CD4-positive, alpha-beta memory T cell (primary cell): ENCODE measurements at regions of chr12 and their contacts with region 1.

Region 1: DNA sequence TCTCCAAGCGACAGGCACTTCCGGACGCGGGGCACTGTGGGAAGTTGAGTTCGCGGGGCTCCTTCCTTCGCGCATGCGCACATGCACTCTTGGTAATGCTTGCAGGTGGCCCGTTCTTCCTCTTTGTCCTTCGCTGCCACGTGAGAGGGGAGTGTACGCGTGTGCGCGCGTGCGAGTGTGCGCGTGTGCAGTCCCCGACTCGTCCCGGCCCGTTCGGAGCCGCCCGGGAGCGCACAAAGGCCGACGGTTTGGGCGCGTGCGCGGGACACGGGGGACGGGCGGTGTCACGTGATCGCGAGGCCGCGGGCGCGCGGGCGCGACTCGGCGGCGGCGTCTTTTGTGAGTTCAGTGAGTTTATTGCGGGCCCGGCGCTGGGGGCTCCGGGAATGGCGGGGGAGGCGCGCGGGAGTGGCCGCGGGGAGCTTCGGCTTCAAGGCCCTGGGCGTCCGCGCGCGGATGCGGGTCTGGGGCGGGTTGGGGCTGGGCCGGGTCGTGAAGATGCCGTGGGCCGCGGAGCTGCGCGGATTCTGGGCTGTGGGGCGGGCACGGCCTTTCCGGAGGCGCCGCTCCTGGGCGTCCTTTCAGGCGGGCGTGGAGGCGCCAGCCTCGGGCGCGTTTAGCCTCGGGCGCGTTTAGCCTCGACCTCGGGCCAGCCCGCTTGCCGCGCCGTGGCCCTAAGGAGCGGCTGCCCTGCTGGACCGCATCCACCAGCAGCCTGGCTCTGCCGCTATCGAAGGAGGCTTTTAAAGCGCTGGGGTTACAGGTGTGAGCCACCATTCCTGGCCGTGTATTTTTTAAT is at the start of gene ZNF84:
- DNase-seq: peak; percentile 96 to 99 (median 98)
- H3K4me3 ChIP-seq: peak within 1 kb of the TSS in 1 of 2 donors; percentile 54
- H3K4me3 Mint-ChIP-seq: peak within 1 kb of the TSS; percentile 85 to 98 (median 94)
- H3K27ac ChIP-seq: peak within 1 kb of the TSS; percentile 77
- H3K27ac Mint-ChIP-seq: peak within 1 kb of the TSS; percentile 91 to 98 (median 96)
- H3K4me1 ChIP-seq: peaks cover 12% of the 10 kb centered on the region
- H3K4me1 Mint-ChIP-seq: peaks cover 3 to 14% (median 7%) of the 10 kb centered on the region in 4 donors
- H3K27me3 ChIP-seq: no peaks in the 10 kb centered on the region
- H3K27me3 Mint-ChIP-seq: no peaks in the 10 kb centered on the region
- total RNA-seq, gene ZNF84: 42.0 to 46.2 TPM

Region 2: DNA sequence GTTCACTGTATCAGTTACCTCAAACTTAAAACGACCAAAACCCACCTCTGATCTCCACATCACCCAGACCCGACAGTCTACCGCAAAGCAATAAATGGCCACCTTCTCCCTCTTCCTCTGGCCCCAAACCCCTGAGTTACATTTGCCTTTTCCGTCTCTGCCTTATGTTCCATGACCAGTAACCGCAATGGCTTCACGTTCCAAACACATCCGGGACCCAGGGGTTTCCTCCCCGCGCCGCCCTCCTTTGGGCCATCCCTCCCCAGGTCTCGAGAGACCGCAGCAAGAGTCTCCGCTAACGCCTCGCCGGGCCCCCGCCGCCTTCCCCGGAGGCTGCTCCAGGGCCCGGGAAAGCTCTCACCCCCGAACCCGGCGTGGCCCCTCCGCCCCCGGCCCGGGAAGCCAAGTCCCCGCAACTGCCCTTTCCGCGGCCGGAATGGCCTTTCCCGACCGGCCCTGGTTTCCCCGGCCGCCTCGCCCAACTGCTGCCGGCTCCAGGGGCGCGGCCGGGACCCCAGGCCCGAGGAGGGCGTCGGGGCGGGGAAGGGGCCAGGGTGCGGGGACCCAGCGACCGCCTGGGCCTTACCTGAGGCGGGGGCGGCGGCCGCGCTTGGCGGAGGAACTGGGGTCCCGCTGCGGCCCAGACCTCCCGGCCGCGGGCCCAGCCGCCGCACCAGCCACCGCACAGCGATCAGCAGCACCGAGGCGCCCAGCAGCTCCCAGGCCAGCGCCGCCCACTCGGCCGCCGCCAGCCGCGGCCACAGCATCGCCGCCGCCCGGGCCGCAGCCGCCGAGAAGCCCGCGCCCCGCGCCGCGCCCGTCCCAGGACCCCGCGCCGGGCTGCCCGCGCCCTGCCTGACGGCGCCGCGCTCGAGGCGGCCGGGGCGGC is 276.1 kb before region 1 on chr12 and contains the start of gene ANKLE2:
- CTCF ChIA-PET with region 1: no interaction called
- POLR2A ChIA-PET with region 1: no interaction called
- intact Hi-C with region 1: loop called (anchors 5 kb)
- DNase-seq: peak; percentile 68 to 86 (median 70)
- H3K4me3 ChIP-seq: peak within 1 kb of the TSS; percentile 75 to 81
- H3K4me3 Mint-ChIP-seq: peak within 1 kb of the TSS; percentile 82 to 99 (median 93)
- H3K27ac ChIP-seq: peak within 1 kb of the TSS; percentile 89
- H3K27ac Mint-ChIP-seq: peak within 1 kb of the TSS; percentile 95 to 99 (median 97)
- H3K4me1 ChIP-seq: peaks cover 24% of the 10 kb centered on the region
- H3K4me1 Mint-ChIP-seq: peaks cover 14 to 27% (median 22%) of the 10 kb centered on the region in 4 donors
- H3K27me3 ChIP-seq: no peaks in the 10 kb centered on the region
- H3K27me3 Mint-ChIP-seq: no peaks in the 10 kb centered on the region
- total RNA-seq, gene ANKLE2: 95.6 to 101 TPM

Region 3: DNA sequence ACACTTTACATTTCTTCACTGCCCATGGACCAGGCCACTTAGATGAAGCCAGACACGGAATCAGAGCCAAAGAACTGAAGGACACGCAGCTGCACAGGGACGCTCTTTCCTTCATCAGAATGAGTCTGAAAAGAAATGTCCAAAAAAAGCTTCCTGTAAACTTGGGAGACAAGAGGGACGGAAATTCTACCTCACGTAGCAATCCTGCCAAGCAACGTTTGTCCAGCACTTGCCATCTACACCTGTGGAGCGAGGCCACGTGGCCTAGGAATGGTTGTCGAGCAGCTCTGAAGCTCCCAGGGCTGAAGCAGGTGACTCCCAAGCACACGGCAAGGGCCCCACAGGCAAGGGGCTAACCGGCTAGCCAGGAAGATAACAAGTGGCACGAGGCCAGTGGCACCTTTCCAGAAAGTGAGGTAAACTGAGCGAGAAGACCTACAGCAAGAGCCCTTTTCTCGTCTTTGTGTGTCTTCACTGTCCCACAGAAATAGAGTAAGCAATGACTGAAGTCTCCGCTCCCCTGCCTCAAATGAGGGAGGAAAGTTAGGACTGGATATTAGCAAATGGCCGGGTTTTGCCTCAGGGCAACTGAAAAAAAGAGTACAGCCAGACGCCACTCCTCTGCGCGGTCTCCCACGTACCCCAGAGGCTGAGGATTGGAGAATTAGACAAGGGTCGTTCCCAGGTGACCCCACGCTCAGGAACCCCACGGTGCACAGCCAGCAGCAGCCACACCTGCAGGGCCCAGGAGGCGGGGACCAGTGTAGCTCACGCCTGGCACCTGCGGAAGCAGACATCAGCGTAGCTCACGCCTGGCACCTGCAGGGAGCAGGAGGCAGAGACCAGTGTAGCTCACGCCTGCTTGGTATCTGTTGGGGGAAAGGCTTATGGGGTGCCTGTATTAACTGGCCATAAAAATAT is 89.0 kb before region 1 on chr12:
- CTCF ChIA-PET with region 1: no interaction called
- POLR2A ChIA-PET with region 1: no interaction called
- intact Hi-C with region 1: no loop called
- DNase-seq: no peak
- H3K4me3 ChIP-seq: no peak overlapping the region
- H3K4me3 Mint-ChIP-seq: no peak overlapping the region
- H3K27ac ChIP-seq: no peak overlapping the region
- H3K27ac Mint-ChIP-seq: no peak overlapping the region
- H3K4me1 ChIP-seq: no peaks in the 10 kb centered on the region
- H3K4me1 Mint-ChIP-seq: peaks cover 0 to 6% (median 3%) of the 10 kb centered on the region in 4 donors
- H3K27me3 ChIP-seq: no peaks in the 10 kb centered on the region
- H3K27me3 Mint-ChIP-seq: no peaks in the 10 kb centered on the region

Region 4: DNA sequence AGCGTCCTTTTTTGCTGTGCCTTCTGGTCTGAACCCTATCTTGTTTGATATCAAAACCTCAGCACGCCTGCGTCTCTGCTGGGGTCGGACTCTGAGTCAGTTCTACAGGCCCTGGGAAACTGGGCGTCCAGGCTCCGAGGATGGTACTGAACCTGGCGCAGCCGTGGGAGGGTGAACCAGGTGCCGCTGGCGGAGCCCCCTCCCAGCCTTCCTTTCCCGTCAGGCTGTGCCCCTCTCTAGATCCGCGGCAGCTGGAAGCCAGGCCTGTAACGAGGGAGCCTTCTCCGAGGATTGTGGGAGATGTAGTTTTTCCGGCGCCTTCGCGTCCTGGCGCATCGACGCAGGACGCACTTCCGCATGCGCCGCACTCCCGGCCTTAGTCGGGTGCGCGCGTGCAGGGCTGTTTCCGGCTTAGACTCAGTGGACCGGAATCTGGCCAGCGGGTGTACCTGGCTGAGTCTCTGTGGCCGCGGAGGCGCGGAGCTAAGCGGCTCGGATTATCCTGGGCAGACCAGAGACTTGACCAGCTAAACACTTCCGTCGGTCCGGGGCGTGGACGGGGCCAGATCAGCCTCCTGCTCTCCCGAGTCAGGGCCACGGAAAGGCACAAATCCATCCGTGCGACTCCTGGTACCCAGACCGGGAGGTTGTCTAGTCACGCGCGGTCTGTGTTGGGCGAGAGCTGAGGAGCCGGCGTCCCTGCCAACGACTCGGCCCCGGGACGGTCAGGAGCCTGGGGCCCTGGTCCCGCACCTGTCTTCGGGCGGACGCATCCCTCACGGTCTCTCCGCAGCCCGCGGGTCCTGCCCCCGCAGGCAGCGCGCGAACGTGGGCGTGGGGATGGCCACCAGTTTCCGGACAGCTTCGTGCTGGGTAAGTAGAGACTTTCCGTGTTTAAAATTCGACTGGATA is 51.1 kb before region 1 on chr12 and contains the start of gene ZNF26:
- CTCF ChIA-PET with region 1: no interaction called
- POLR2A ChIA-PET with region 1: interaction called, 17 read pairs
- intact Hi-C with region 1: loop called (anchors 1 kb)
- DNase-seq: peak; percentile 85 to 90 (median 86)
- H3K4me3 ChIP-seq: peak within 1 kb of the TSS; percentile 58 to 64
- H3K4me3 Mint-ChIP-seq: peak within 1 kb of the TSS; percentile 92 to 98 (median 95)
- H3K27ac ChIP-seq: peak within 1 kb of the TSS; percentile 77
- H3K27ac Mint-ChIP-seq: peak within 1 kb of the TSS; percentile 95 to 97 (median 97)
- H3K4me1 ChIP-seq: peaks cover 22% of the 10 kb centered on the region
- H3K4me1 Mint-ChIP-seq: peaks cover 24 to 48% (median 33%) of the 10 kb centered on the region in 4 donors
- H3K27me3 ChIP-seq: no peaks in the 10 kb centered on the region
- H3K27me3 Mint-ChIP-seq: peaks cover 0 to 3% of the 10 kb centered on the region in 2 donors
- total RNA-seq, gene ZNF26: 25.9 to 28.2 TPM

Region 5: DNA sequence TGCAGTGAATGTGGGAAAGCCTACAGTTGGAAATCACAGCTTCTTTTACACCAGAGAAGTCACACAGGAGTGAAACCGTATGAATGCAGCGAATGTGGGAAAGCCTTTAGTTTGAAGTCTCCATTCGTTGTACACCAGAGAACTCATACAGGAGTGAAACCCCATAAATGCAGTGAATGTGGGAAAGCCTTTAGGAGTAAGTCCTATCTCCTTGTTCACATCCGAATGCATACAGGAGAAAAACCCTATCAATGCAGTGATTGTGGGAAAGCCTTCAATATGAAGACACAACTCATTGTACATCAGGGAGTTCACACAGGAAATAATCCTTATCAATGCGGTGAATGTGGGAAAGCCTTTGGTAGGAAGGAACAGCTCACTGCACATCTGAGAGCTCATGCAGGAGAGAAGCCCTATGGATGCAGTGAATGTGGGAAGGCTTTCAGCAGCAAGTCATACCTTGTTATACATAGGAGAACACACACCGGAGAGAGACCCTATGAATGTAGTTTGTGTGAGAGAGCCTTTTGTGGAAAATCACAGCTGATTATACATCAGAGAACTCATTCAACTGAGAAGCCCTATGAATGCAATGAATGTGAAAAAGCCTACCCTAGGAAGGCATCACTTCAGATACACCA is 26.6 kb before region 1 on chr12:
- CTCF ChIA-PET with region 1: no interaction called
- POLR2A ChIA-PET with region 1: no interaction called
- intact Hi-C with region 1: loop called (anchors 1 kb)
- DNase-seq: peak in 2 of 5 donors; percentile 3 to 7
- H3K4me3 ChIP-seq: no peak overlapping the region
- H3K4me3 Mint-ChIP-seq: peak overlapping the region in 1 of 8 donors; percentile 41
- H3K27ac ChIP-seq: no peak overlapping the region
- H3K27ac Mint-ChIP-seq: peak overlapping the region in 1 of 7 donors; percentile 40
- H3K4me1 ChIP-seq: no peaks in the 10 kb centered on the region
- H3K4me1 Mint-ChIP-seq: peaks cover 0 to 3% (median under 1%) of the 10 kb centered on the region in 4 donors
- H3K27me3 ChIP-seq: no peaks in the 10 kb centered on the region
- H3K27me3 Mint-ChIP-seq: no peaks in the 10 kb centered on the region

Region 6: DNA sequence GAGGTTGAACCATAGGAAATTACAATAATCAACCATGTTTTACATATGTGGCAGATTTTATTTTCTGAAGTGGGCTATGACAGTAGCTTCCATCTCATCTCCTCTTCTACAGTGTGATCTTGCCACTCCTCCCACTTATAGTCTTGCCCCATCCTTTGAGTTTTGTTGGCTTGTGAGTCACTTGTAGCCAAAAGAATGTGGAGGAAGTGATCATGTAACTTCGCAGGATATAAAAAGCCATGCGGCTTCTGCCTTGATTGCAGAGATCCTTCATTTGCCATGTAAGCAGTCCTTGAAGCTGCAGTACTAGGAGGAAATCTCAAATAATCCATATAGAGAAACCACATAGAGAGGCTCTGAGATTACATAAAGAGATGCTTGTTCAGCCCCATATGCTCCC is 13.8 kb before region 1 on chr12:
- CTCF ChIA-PET with region 1: no interaction called
- POLR2A ChIA-PET with region 1: no interaction called
- intact Hi-C with region 1: no loop called
- DNase-seq: no peak
- H3K4me3 ChIP-seq: no peak overlapping the region
- H3K4me3 Mint-ChIP-seq: no peak overlapping the region
- H3K27ac ChIP-seq: no peak overlapping the region
- H3K27ac Mint-ChIP-seq: no peak overlapping the region
- H3K4me1 ChIP-seq: no peaks in the 10 kb centered on the region
- H3K4me1 Mint-ChIP-seq: no peaks in the 10 kb centered on the region
- H3K27me3 ChIP-seq: no peaks in the 10 kb centered on the region
- H3K27me3 Mint-ChIP-seq: no peaks in the 10 kb centered on the region

Region 7: DNA sequence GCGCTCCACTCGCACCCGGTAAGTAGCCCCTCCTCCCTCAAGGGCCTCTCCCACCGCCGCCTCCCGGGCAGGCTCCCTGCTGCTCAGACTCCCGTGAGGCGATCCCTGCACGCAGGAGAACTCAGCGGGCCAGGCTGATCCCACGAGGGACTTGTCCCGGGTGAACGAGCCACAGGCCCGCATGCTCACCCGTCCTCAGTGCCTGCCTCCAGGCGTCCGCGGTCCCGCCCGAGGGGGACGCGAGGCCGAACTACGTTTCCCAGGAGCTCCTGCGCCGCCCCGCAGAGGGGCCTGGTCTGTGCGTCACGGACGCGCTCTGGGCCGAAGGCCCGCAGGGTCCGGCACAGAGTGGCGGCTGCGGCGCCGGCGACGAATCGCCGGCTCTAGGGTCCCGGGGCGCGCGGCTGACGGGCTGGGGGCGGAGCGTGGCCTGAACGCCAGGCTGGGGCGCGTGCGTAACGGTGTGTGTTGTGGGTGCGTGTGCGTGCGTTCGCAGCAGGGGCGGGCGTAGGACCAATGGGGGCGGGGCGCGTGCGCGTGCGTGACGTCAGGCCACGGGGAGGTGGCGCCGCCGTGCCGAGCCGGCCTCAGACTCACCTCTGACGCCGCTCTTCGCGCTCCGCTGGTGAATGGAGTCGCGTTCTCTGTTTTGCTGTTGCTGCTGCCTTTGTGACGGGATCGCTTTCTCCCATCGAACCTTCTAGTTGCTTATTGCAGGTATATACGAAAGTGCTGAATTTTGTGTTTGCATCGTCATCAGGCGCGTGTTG is 92.8 kb after region 1 on chr12 and contains the starts of genes ZNF10 and ZNF891:
- CTCF ChIA-PET with region 1: no interaction called
- POLR2A ChIA-PET with region 1: interaction called, 22 read pairs
- intact Hi-C with region 1: loop called (anchors 1 kb)
- DNase-seq: peak; percentile 95 to 98 (median 98)
- H3K4me3 ChIP-seq: peak within 1 kb of the TSS; percentile 59 to 87
- H3K4me3 Mint-ChIP-seq: peak within 1 kb of the TSS; percentile 87 to 99 (median 95)
- H3K27ac ChIP-seq: peak within 1 kb of the TSS; percentile 98
- H3K27ac Mint-ChIP-seq: peak within 1 kb of the TSS; percentile 92 to 100 (median 99)
- H3K4me1 ChIP-seq: peaks cover 10% of the 10 kb centered on the region
- H3K4me1 Mint-ChIP-seq: peaks cover 11 to 25% (median 19%) of the 10 kb centered on the region in 4 donors
- H3K27me3 ChIP-seq: no peaks in the 10 kb centered on the region
- H3K27me3 Mint-ChIP-seq: no peaks in the 10 kb centered on the region
- total RNA-seq, gene ZNF10: 17.4 to 19.6 TPM
- total RNA-seq, gene ZNF891: 6.2 to 7.3 TPM

Region 8: GRCh38 chr12:133181238-133181959 is 144.0 kb after region 1 on chr12 and contains the start of gene ZNF268:
- CTCF ChIA-PET with region 1: interaction called, 3 read pairs
- POLR2A ChIA-PET with region 1: interaction called, 4 read pairs
- intact Hi-C with region 1: loop called (anchors 1 kb)
- DNase-seq: peak; percentile 84 to 89 (median 85)
- H3K4me3 ChIP-seq: peak within 1 kb of the TSS; percentile 96 to 100
- H3K4me3 Mint-ChIP-seq: peak within 1 kb of the TSS; percentile 89 to 97 (median 94)
- H3K27ac ChIP-seq: peak within 1 kb of the TSS; percentile 73
- H3K27ac Mint-ChIP-seq: peak within 1 kb of the TSS; percentile 91 to 98 (median 96)
- H3K4me1 ChIP-seq: peaks cover 10% of the 10 kb centered on the region
- H3K4me1 Mint-ChIP-seq: peaks cover 19 to 34% (median 23%) of the 10 kb centered on the region in 4 donors
- H3K27me3 ChIP-seq: no peaks in the 10 kb centered on the region
- H3K27me3 Mint-ChIP-seq: no peaks in the 10 kb centered on the region
- total RNA-seq, gene ZNF268: 34.9 to 39.6 TPM